Activated T-helper 1 cell treated with anti-CD3 and anti-CD28 coated beads, Interleukin-12 subunit alpha, Interleukin-12 subunit beta, Interleukin-2, Interleukin-4 antibody, amounts not matched to agents 30 ng/mL and 10 ng/mL and 1 ng/mL, durations not matched to agents 14 hours and 24 hours and 36 hours (primary cell): ENCODE measurements at regions of chr13 and their contacts with region 1.

Region 1: GRCh38 chr13:51764184-51765141 is 39.5 kb downstream of the DHRS12 start:
- DNase-seq: peak; percentile 43
- H3K4me3 Mint-ChIP-seq: peak overlapping the region; percentile 79
- H3K27ac Mint-ChIP-seq: peak overlapping the region; percentile 96
- H3K4me1 Mint-ChIP-seq: peaks cover 41% of the 10 kb centered on the region
- H3K27me3 Mint-ChIP-seq: no peaks in the 10 kb centered on the region

Region 2: GRCh38 chr13:51614350-51614786 is 150.1 kb before region 1 on chr13:
- intact Hi-C with region 1: loop called (anchors 10 kb)
- DNase-seq: peak; percentile 30
- H3K4me3 Mint-ChIP-seq: peak overlapping the region; percentile 86
- H3K27ac Mint-ChIP-seq: peak overlapping the region; percentile 97
- H3K4me1 Mint-ChIP-seq: peaks cover 18% of the 10 kb centered on the region
- H3K27me3 Mint-ChIP-seq: peaks cover 2% of the 10 kb centered on the region

Region 3: GRCh38 chr13:51729866-51730546 is 34.5 kb before region 1 on chr13:
- intact Hi-C with region 1: loop called (anchors 1 kb)
- DNase-seq: no peak
- H3K4me3 Mint-ChIP-seq: no peak overlapping the region
- H3K27ac Mint-ChIP-seq: no peak overlapping the region
- H3K4me1 Mint-ChIP-seq: peaks cover 13% of the 10 kb centered on the region
- H3K27me3 Mint-ChIP-seq: no peaks in the 10 kb centered on the region

Region 4: DNA sequence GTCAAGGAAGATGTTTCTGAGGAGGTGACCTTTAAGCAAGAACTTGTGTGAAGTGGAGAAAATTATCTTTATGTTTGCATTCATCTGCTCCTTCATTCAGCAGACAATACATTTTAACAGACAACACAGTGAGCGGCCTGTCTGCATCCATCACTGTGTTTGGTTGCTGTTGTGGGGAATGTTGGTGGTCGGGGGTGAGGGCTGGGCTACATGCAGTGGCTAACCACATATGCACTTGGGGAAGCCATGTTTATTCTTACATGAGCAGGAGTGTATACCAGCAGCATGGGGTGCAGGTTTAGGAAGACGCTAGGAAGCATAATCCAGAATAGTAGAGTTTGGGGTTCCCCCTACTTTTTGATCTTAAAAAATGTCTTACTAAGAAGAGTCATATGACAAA is 26.9 kb before region 1 on chr13:
- intact Hi-C with region 1: loop called (anchors 1 kb)
- DNase-seq: no peak
- H3K4me3 Mint-ChIP-seq: peak overlapping the region; percentile 49
- H3K27ac Mint-ChIP-seq: peak overlapping the region; percentile 67
- H3K4me1 Mint-ChIP-seq: peaks cover 43% of the 10 kb centered on the region
- H3K27me3 Mint-ChIP-seq: no peaks in the 10 kb centered on the region

Region 5: DNA sequence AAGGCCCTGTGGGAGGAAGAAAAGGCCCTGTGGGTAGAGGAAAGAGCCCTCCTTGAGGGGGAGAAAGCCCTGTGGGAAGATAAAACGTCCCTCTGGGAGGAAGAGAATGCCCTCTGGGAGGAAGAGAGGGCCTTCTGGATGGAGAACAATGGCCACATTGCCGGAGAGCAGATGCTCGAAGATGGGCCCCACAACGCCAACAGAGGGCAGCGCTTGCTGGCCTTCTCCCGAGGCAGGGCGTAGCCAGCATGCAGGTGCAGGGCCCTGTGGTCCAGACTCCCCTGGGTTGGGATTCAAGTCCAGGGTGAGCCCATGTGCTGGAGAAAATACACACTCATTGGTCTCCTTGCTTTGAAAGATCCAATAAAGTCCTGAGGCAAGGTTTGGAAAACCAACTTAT is 101.4 kb after region 1 on chr13:
- intact Hi-C with region 1: no loop called
- DNase-seq: no peak
- H3K4me3 Mint-ChIP-seq: no peak overlapping the region
- H3K27ac Mint-ChIP-seq: no peak overlapping the region
- H3K4me1 Mint-ChIP-seq: peaks cover 7% of the 10 kb centered on the region
- H3K27me3 Mint-ChIP-seq: peaks cover 7% of the 10 kb centered on the region